B cell (primary cell): ENCODE measurements at regions of chr1 and their contacts with region 1.

Region 1: GRCh38 chr1:29033829-29034466 is 89.8 kb downstream of the TMEM200B start:
- DNase-seq: peak; percentile 65
- ATAC-seq: no peak
- H3K4me3 ChIP-seq: no peak overlapping the region
- H3K4me3 Mint-ChIP-seq: no peak overlapping the region
- H3K27ac ChIP-seq: no peak overlapping the region
- H3K27ac Mint-ChIP-seq: no peak overlapping the region
- H3K4me1 ChIP-seq: no peaks in the 10 kb centered on the region
- H3K4me1 Mint-ChIP-seq: no peaks in the 10 kb centered on the region
- H3K27me3 ChIP-seq: no peaks in the 10 kb centered on the region
- H3K27me3 Mint-ChIP-seq: no peaks in the 10 kb centered on the region
- CTCF ChIP-seq: peak; percentile 91

Region 2: DNA sequence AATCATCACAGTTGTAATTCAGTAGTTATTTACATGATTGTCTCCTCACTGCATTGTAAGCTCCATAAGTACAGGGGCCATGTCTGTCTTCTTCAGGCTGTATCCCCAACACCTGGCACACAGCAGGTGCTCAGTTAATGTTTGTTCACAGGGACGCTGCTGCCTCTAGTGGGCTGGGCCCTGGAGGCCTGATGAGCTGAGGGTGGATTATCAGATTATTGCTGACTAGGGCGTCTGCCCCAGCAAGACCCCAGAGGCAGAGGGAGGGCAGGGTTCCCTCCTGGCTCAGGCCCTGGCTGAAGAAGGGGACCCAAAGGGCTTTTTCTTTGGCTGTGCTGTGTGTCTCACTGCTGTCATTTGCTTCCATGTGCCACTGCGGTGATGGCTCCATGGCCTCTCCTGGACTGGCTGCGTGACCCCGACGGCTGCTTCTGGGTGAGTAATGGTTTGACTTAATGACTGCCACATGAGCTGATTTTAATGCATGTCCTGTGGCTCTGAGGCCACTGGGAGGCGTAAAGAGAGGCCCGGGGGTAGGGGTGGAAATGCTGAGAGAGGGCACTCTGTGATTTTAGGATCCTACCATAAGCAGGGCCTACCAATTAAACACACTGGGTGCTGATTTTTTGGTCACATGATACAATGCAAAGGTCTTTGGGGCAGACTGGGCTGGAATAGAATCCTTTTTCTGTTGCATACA is 140.4 kb before region 1 on chr1:
- CTCF ChIA-PET with region 1: interaction called, 72 read pairs
- POLR2A ChIA-PET with region 1: no interaction called
- intact Hi-C with region 1: no loop called
- DNase-seq: peak; percentile 36
- ATAC-seq: peak; percentile 49
- H3K4me3 ChIP-seq: no peak overlapping the region
- H3K4me3 Mint-ChIP-seq: no peak overlapping the region
- H3K27ac ChIP-seq: no peak overlapping the region
- H3K27ac Mint-ChIP-seq: peak overlapping the region; percentile 56
- H3K4me1 ChIP-seq: peaks cover 4 to 10% of the 10 kb centered on the region in 2 donors
- H3K4me1 Mint-ChIP-seq: peaks cover 45% of the 10 kb centered on the region
- H3K27me3 ChIP-seq: no peaks in the 10 kb centered on the region
- H3K27me3 Mint-ChIP-seq: no peaks in the 10 kb centered on the region
- CTCF ChIP-seq: peak; percentile 49

Region 3: GRCh38 chr1:28914228-28915030 is 119.5 kb before region 1 on chr1 and contains the start of gene EPB41:
- CTCF ChIA-PET with region 1: interaction called, 15 read pairs
- POLR2A ChIA-PET with region 1: interaction called, 13 read pairs
- intact Hi-C with region 1: no loop called
- DNase-seq: peak; percentile 93
- ATAC-seq: peak; percentile 92
- H3K4me3 ChIP-seq: peak within 1 kb of the TSS; percentile 58 to 87 (median 80)
- H3K4me3 Mint-ChIP-seq: peak within 1 kb of the TSS; percentile 99
- H3K27ac ChIP-seq: peak within 1 kb of the TSS; percentile 37 to 74
- H3K27ac Mint-ChIP-seq: peak within 1 kb of the TSS; percentile 94
- H3K4me1 ChIP-seq: peaks cover 19 to 27% of the 10 kb centered on the region in 2 donors
- H3K4me1 Mint-ChIP-seq: peaks cover 45% of the 10 kb centered on the region
- H3K27me3 ChIP-seq: no peaks in the 10 kb centered on the region
- H3K27me3 Mint-ChIP-seq: no peaks in the 10 kb centered on the region
- CTCF ChIP-seq: no peak
- total RNA-seq, gene EPB41: 186 and 203 TPM in 2 replicates

Region 4: GRCh38 chr1:29022620-29023019 is 11.3 kb before region 1 on chr1:
- CTCF ChIA-PET with region 1: interaction called, 25 read pairs
- POLR2A ChIA-PET with region 1: no interaction called
- intact Hi-C with region 1: no loop called
- DNase-seq: no peak
- ATAC-seq: no peak
- H3K4me3 ChIP-seq: no peak overlapping the region
- H3K4me3 Mint-ChIP-seq: no peak overlapping the region
- H3K27ac ChIP-seq: no peak overlapping the region
- H3K27ac Mint-ChIP-seq: no peak overlapping the region
- H3K4me1 ChIP-seq: no peaks in the 10 kb centered on the region
- H3K4me1 Mint-ChIP-seq: no peaks in the 10 kb centered on the region
- H3K27me3 ChIP-seq: no peaks in the 10 kb centered on the region
- H3K27me3 Mint-ChIP-seq: no peaks in the 10 kb centered on the region
- CTCF ChIP-seq: no peak

Region 5: DNA sequence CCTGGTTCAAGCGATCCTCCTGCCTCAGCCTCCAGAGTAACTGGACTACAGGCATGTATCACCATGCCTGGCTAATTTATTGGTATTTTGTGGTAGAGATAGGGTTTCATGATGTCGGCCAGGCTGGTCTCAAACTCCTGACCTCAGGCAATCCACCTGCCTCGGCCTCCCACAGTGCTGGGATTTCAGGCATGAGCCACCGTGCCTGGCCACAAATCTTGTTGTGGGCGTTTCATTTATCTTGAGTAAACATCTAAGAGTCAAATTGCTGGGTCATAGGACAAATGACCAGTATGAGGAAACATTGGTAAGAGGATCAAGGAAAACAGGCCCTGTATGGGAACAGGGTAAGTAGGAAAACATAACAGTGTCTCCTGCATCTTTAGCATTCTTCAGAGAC is 71.9 kb after region 1 on chr1:
- CTCF ChIA-PET with region 1: no interaction called
- POLR2A ChIA-PET with region 1: no interaction called
- intact Hi-C with region 1: no loop called
- DNase-seq: no peak
- ATAC-seq: no peak
- H3K4me3 ChIP-seq: no peak overlapping the region
- H3K4me3 Mint-ChIP-seq: no peak overlapping the region
- H3K27ac ChIP-seq: no peak overlapping the region
- H3K27ac Mint-ChIP-seq: no peak overlapping the region
- H3K4me1 ChIP-seq: no peaks in the 10 kb centered on the region
- H3K4me1 Mint-ChIP-seq: no peaks in the 10 kb centered on the region
- H3K27me3 ChIP-seq: no peaks in the 10 kb centered on the region
- H3K27me3 Mint-ChIP-seq: no peaks in the 10 kb centered on the region
- CTCF ChIP-seq: no peak